Naive thymus-derived CD4-positive, alpha-beta T cell (primary cell): ENCODE measurements at regions of chr12 and their contacts with region 1.

Region 1: DNA sequence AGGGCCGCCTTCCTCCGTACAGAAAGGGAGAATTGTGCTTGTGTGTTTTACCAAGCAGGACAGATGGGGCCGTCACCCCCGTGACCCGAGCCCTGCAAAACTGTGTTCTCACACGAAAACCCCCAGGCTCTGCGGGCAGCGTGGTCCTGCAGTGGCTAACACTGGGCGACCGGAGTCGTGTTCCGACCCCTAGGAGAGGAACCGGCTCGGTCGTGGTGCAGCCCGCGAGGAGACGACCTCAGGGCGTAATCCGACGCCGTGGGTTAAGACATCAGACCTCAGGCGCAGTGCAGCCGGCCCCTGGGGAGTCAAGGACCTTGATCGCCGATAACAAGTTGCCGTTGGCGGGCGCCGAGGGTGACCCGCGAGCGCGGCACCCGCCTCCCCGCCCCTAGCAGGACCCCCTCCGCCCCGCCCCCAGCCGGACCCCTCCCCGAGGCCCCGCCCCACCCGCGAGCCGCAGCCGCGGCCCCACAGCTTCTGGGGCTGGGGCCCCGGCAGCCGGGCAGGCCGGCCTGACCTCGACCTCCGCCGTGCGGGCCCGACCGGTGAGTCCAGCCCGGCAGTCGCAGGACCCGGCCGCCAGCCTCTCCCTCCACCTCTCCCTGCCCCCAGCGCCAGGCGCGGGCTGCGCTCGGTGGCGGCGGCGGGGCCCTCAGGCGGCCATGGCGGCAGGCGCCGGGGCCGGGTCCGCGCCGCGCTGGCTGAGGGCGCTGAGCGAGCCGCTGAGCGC is at the start of gene CHPT1:
- DNase-seq: peak; percentile 40 to 75 (median 58)
- ATAC-seq: peak; percentile 82
- H3K4me3 ChIP-seq: peak within 1 kb of the TSS; percentile 88
- H3K4me3 Mint-ChIP-seq: peak within 1 kb of the TSS; percentile 92 to 95 (median 94)
- H3K27ac ChIP-seq: peak within 1 kb of the TSS; percentile 70
- H3K27ac Mint-ChIP-seq: peak within 1 kb of the TSS; percentile 66 to 93 (median 90)
- H3K4me1 ChIP-seq: peaks cover 4 to 14% of the 10 kb centered on the region in 2 donors
- H3K4me1 Mint-ChIP-seq: peaks cover 17 to 61% (median 53%) of the 10 kb centered on the region in 7 donors
- H3K27me3 ChIP-seq: no peaks in the 10 kb centered on the region
- H3K27me3 Mint-ChIP-seq: peaks cover 0 to 23% (median 0%) of the 10 kb centered on the region in 5 donors
- total RNA-seq, gene CHPT1: 6.5 to 22.6 (median 14.5) TPM

Region 2: DNA sequence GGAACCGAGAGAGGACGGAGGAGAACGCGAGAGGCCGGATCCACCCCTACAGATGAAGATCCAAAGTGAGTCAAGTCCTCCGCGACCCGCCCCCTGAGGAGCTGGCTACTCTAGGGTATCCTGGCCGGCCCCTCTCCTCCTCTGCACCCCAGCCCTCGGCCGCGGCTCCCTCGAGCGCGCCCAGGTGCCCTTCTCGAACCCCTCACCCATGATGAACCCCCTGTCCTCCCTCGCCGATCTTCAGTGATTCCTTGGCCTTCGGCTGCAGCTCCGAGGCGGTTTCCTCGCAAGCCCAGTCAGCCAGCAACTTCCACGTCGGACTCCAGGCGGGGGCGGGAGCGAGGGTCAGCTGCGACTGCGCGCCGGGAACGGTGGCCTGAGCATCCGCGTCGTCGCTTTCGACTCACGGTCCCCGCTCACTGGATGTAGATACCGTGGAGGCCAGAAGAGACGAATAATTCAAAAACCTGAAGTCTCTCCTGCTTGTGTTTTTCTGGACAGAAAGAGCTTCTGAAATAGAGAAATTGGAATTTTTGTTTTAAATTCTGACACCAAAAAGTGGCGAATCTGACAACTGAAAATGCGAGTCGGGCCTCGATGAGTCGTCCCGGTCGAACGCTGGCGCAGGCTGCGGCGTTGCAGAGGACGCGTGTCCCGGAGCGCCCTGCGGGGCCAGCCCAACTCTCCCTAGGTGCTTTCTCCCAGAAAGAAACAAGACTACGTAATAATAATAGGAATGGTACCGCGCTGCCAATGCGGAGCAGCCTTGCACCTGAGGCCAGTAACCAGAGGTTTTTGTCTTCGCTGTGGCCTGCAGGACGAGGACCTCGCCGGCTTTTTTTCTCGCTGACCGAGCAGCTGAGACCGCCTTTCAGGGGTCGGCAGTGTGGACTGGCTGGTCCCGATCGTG is 289.7 kb before region 1 on chr12 and contains the start of gene ARL1:
- CTCF ChIA-PET with region 1: no interaction called
- POLR2A ChIA-PET with region 1: interaction called, 4 read pairs
- intact Hi-C with region 1: loop called (anchors 2 kb)
- DNase-seq: peak; percentile 41 to 85 (median 65)
- ATAC-seq: peak; percentile 88
- H3K4me3 ChIP-seq: peak within 1 kb of the TSS; percentile 97
- H3K4me3 Mint-ChIP-seq: peak within 1 kb of the TSS; percentile 92 to 99 (median 98)
- H3K27ac ChIP-seq: peak within 1 kb of the TSS; percentile 85
- H3K27ac Mint-ChIP-seq: peak within 1 kb of the TSS; percentile 82 to 98 (median 95)
- H3K4me1 ChIP-seq: peaks cover 0 to 15% of the 10 kb centered on the region in 2 donors
- H3K4me1 Mint-ChIP-seq: peaks cover 16 to 45% (median 30%) of the 10 kb centered on the region in 7 donors
- H3K27me3 ChIP-seq: no peaks in the 10 kb centered on the region
- H3K27me3 Mint-ChIP-seq: peaks cover 0 to 11% (median 2%) of the 10 kb centered on the region in 5 donors
- total RNA-seq, gene ARL1: 26.2 to 48.4 (median 39.3) TPM

Region 3: GRCh38 chr12:101570047-101570446 is 127.3 kb before region 1 on chr12:
- CTCF ChIA-PET with region 1: no interaction called
- POLR2A ChIA-PET with region 1: no interaction called
- intact Hi-C with region 1: loop called in 1 of 2 experiments (anchors 5 kb)
- DNase-seq: no peak
- ATAC-seq: no peak
- H3K4me3 ChIP-seq: no peak overlapping the region
- H3K4me3 Mint-ChIP-seq: no peak overlapping the region
- H3K27ac ChIP-seq: no peak overlapping the region
- H3K27ac Mint-ChIP-seq: no peak overlapping the region
- H3K4me1 ChIP-seq: no peaks in the 10 kb centered on the region
- H3K4me1 Mint-ChIP-seq: peaks cover 0 to 7% (median 4%) of the 10 kb centered on the region in 7 donors
- H3K27me3 ChIP-seq: peaks cover 0 to 2% of the 10 kb centered on the region in 2 donors
- H3K27me3 Mint-ChIP-seq: peaks cover 0 to 23% (median 20%) of the 10 kb centered on the region in 5 donors

Region 4: GRCh38 chr12:101727133-101727532 is 29.8 kb after region 1 on chr12:
- CTCF ChIA-PET with region 1: interaction called, 3 read pairs
- POLR2A ChIA-PET with region 1: no interaction called
- intact Hi-C with region 1: loop called in 1 of 2 experiments (anchors 2 kb)
- DNase-seq: no peak
- ATAC-seq: no peak
- H3K4me3 ChIP-seq: no peak overlapping the region
- H3K4me3 Mint-ChIP-seq: no peak overlapping the region
- H3K27ac ChIP-seq: no peak overlapping the region
- H3K27ac Mint-ChIP-seq: no peak overlapping the region
- H3K4me1 ChIP-seq: no peaks in the 10 kb centered on the region
- H3K4me1 Mint-ChIP-seq: peaks cover 0 to 4% (median 0%) of the 10 kb centered on the region in 7 donors
- H3K27me3 ChIP-seq: no peaks in the 10 kb centered on the region
- H3K27me3 Mint-ChIP-seq: no peaks in the 10 kb centered on the region

Region 5: DNA sequence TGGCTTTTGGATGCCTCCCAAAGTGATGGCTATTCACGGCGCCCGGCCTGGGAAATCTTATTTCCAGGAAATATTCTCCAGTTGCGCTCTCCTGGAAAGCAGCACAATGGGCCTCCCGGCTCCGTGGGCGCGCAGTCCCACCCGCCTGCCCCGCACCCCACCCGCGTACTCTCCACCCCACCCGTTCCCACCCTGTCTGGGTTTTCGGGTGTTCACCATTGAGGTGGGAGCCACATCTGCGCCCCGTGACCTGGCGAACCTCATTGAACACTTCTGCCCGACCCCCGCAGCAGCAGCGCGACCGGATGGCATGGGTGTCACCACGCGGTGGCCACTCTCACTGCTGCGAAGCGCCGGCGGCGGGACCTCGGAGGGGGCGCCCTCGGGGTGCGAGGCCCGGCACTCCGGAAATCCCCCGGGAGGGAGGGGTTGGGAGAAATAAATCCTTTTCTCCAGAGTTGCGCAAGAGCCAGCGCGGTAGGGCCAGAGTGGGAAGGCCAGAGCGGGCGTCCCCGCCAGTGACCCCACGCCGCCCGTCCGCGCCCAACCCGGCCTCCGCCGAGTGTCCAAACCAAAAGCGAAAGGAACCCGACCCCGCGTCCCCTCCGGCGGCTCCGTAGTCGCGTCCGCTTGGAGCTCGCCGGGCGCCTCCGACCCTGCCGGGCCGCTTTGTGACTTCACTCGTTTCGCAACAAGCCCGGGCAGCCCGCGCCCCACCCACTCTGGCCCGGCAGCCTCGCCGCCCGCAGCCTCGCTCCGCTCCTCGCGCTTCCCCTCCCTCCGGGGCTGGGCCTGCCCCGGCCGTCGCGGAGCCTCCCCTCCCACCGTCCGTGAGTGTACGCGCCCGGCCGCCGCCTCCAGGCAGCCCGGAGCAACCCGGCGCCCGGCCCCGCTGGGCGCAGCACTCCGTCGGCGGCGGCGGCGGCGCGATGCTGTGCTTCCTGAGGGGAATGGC is 179.8 kb after region 1 on chr12 and contains the start of gene DRAM1:
- CTCF ChIA-PET with region 1: no interaction called
- POLR2A ChIA-PET with region 1: no interaction called
- intact Hi-C with region 1: loop called in 1 of 2 experiments (anchors 2 kb)
- DNase-seq: peak; percentile 45 to 85 (median 61)
- ATAC-seq: peak; percentile 93
- H3K4me3 ChIP-seq: peak within 1 kb of the TSS; percentile 56
- H3K4me3 Mint-ChIP-seq: peak within 1 kb of the TSS; percentile 80 to 95 (median 92)
- H3K27ac ChIP-seq: peak within 1 kb of the TSS; percentile 78
- H3K27ac Mint-ChIP-seq: peak within 1 kb of the TSS; percentile 73 to 90 (median 84)
- H3K4me1 ChIP-seq: peaks cover 0 to 6% of the 10 kb centered on the region in 2 donors
- H3K4me1 Mint-ChIP-seq: peaks cover 8 to 18% (median 12%) of the 10 kb centered on the region in 7 donors
- H3K27me3 ChIP-seq: no peaks in the 10 kb centered on the region
- H3K27me3 Mint-ChIP-seq: peaks cover 0 to 4% (median 0%) of the 10 kb centered on the region in 5 donors
- total RNA-seq, gene DRAM1: 2.4 to 9.5 (median 2.6) TPM